Heart left ventricle (tissue), 16 donors: ENCODE measurements at regions of chr7 and their contacts with region 1.

Region 1: GRCh38 chr7:29806208-29806994 is at the start of gene WIPF3:
- DNase-seq: peak; percentile 30 to 71 (median 50)
- ATAC-seq: peak; percentile 25 to 82 (median 75)
- H3K4me3 ChIP-seq: peak within 1 kb of the TSS; percentile 57 to 81 (median 65)
- H3K27ac ChIP-seq: peak within 1 kb of the TSS in 11 of 12 donors; percentile 27 to 87 (median 69)
- H3K4me1 ChIP-seq: peaks cover 0 to 20% (median 6%) of the 10 kb centered on the region in 12 donors
- H3K27me3 ChIP-seq: peaks cover 0 to 49% (median 0%) of the 10 kb centered on the region in 9 donors
- CTCF ChIP-seq: peak in 4 of 12 donors; percentile 4 to 22 (median 9)
- POLR2A ChIP-seq: no peak
- total RNA-seq, gene WIPF3: 2.6 to 16.5 (median 6.8) TPM

Region 2: GRCh38 chr7:29866490-29866930 is 60.1 kb after region 1 on chr7:
- intact Hi-C with region 1: loop called in 2 of 10 experiments (anchors 5 kb)
- DNase-seq: peak; percentile 39 to 69 (median 67)
- ATAC-seq: peak; percentile 80 to 92 (median 85)
- H3K4me3 ChIP-seq: no peak overlapping the region
- H3K27ac ChIP-seq: peak overlapping the region in 9 of 12 donors; percentile 44 to 73 (median 55)
- H3K4me1 ChIP-seq: peaks cover 0 to 34% (median 26%) of the 10 kb centered on the region in 12 donors
- H3K27me3 ChIP-seq: no peaks in the 10 kb centered on the region
- CTCF ChIP-seq: no peak
- POLR2A ChIP-seq: no peak